Spleen (tissue), 13 donors: ENCODE measurements at regions of chr19 and their contacts with region 1.

Region 1: GRCh38 chr19:48965040-48965805 is at the start of gene FTL:
- DNase-seq: peak; percentile 99
- H3K4me3 ChIP-seq: peak within 1 kb of the TSS; percentile 74 to 99 (median 92)
- H3K27ac ChIP-seq: peak within 1 kb of the TSS; percentile 81 to 98 (median 97)
- H3K4me1 ChIP-seq: peaks cover 35 to 90% (median 75%) of the 10 kb centered on the region in 6 donors
- H3K27me3 ChIP-seq: no peaks in the 10 kb centered on the region
- CTCF ChIP-seq: peak in 3 of 11 experiments; percentile 9 to 17 (median 10)
- POLR2A ChIP-seq: peak; percentile 99 to 100 (median 99)
- total RNA-seq, gene FTL: 4,960 to 10,995 (median 6,703) TPM

Region 2: DNA sequence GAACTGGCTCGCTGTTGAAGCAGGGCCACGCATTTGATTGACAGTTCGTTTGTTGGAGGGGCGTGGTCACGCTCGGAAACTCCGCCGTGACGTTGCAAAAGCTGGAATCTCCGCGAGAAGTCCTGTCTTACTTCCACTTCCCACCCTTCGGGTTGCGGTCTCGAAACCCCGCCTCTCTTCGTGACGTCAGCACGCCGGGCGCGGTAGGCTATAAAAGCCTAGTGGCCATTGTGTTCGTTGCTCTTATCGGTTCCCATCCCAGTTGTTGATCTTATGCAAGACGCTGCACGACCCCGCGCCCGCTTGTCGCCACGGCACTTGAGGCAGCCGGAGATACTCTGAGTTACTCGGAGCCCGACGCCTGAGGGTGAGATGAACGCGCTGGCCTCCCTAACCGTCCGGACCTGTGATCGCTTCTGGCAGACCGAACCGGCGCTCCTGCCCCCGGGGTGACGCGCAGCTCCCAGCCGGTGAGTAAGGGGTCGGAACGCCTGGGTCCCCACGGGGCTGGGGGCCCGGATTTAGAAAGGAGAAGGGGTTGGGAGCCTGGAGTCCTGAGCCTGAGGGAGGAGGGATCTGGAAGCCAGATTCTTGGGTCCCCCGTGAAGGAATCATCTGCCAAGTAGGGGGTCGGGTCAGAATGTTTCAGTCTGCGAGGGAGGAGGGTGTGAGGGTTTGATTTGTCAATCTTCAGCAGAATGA is 92.9 kb before region 1 on chr19 and contains the start of gene PPP1R15A:
- intact Hi-C with region 1: loop called (anchors 10 kb)
- DNase-seq: peak; percentile 99
- H3K4me3 ChIP-seq: peak within 1 kb of the TSS; percentile 60 to 90 (median 82)
- H3K27ac ChIP-seq: peak within 1 kb of the TSS; percentile 96 to 100 (median 100)
- H3K4me1 ChIP-seq: peaks cover 38 to 68% (median 51%) of the 10 kb centered on the region in 6 donors
- H3K27me3 ChIP-seq: peaks cover 0 to 4% (median 0%) of the 10 kb centered on the region in 7 donors
- CTCF ChIP-seq: peak; percentile 13 to 77 (median 53)
- POLR2A ChIP-seq: peak; percentile 96 to 100 (median 98)
- total RNA-seq, gene PPP1R15A: 30.2 to 74.2 (median 47.6) TPM